H1 (cell line): ENCODE measurements at regions of chr7 and their contacts with region 1.

Region 1: GRCh38 chr7:111855161-111855856 is 293.0 kb upstream of the IMMP2L start:
- DNase-seq: no peak
- H3K4me3 ChIP-seq: no peak overlapping the region
- H3K27ac ChIP-seq: no peak overlapping the region
- H3K4me1 ChIP-seq: peaks cover 10 to 16% (median 12%) of the 10 kb centered on the region in 4 experiments
- H3K27me3 ChIP-seq: no peaks in the 10 kb centered on the region
- CTCF ChIP-seq: peak; percentile 15 to 74 (median 68)
- EP300 ChIP-seq: no peak
- POLR2A ChIP-seq: no peak
- RAD21 ChIP-seq: peak; percentile 65 to 70

Region 2: GRCh38 chr7:111711426-111712065 is 143.8 kb before region 1 on chr7:
- CTCF ChIA-PET with region 1: no interaction called
- POLR2A ChIA-PET with region 1: no interaction called
- DNase-seq: no peak
- H3K4me3 ChIP-seq: no peak overlapping the region
- H3K27ac ChIP-seq: no peak overlapping the region
- H3K4me1 ChIP-seq: no peaks in the 10 kb centered on the region
- H3K27me3 ChIP-seq: peaks cover 0 to 1% (median 0%) of the 10 kb centered on the region in 4 experiments; a peak in 1 of 7 replicates
- CTCF ChIP-seq: no peak
- EP300 ChIP-seq: no peak
- POLR2A ChIP-seq: no peak
- RAD21 ChIP-seq: no peak

Region 3: DNA sequence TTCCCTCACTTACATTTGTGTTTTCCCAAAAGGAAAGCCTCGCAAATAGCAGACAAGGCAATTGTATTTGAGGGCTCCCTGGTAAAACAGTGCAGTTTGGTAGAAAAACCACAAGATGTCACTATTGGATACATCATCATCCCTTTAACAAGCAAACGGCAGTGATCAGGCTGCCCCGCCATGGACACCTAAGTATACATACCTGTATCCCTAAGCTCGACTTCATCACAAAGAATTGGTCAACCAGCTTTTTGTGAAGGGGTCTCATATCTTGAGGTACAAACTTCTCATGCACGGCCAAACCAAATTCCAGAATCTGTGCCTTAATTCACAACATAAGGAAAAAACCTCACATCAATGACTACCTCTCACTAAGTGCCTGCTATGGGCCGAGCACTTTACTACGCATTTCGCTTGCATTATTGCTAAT is 113.5 kb before region 1 on chr7:
- CTCF ChIA-PET with region 1: interaction called, 32 read pairs
- POLR2A ChIA-PET with region 1: no interaction called
- DNase-seq: no peak
- H3K4me3 ChIP-seq: no peak overlapping the region
- H3K27ac ChIP-seq: no peak overlapping the region
- H3K4me1 ChIP-seq: peaks cover 0 to 9% (median 0%) of the 10 kb centered on the region in 4 experiments; a peak in 1 of 7 replicates
- H3K27me3 ChIP-seq: no peaks in the 10 kb centered on the region
- CTCF ChIP-seq: peak in 2 of 3 experiments; percentile 79 to 87; a peak in 3 of 4 replicates
- EP300 ChIP-seq: no peak
- POLR2A ChIP-seq: no peak
- RAD21 ChIP-seq: peak; percentile 86 to 91

Region 4: DNA sequence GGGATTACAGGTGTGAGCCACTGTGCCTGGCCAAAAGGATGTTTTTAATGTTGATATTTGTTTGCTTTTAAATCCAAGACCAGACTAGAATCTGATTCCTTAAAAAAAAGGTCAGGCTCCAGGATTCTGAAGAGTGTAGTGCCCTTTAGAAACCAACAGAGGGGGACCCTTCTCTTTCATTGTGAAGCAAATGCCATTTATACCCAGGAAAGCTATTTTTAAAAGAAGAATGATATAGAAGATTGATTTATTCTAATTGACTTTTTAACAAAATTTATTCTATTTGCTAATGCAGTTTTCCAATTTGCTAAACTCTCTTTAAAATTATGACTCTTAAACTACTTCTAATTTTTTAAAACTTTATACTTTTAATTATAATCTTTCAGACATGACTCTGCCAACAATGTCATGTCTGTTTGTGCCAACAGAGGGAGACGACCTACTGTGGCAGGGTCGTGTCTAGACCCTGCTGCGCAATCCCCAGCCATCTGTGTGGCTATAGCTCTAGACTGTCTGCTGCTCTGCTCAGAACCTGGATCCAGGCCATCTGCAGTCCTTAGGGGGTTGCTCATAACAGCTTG is 92.0 kb before region 1 on chr7:
- CTCF ChIA-PET with region 1: interaction called, 274 read pairs
- POLR2A ChIA-PET with region 1: interaction called, 4 read pairs
- DNase-seq: no peak
- H3K4me3 ChIP-seq: no peak overlapping the region
- H3K27ac ChIP-seq: no peak overlapping the region
- H3K4me1 ChIP-seq: no peaks in the 10 kb centered on the region; a peak in 1 of 7 replicates
- H3K27me3 ChIP-seq: peaks cover 0 to 2% (median 0%) of the 10 kb centered on the region in 4 experiments; a peak in 1 of 7 replicates
- CTCF ChIP-seq: peak; percentile 44 to 62 (median 58)
- EP300 ChIP-seq: no peak
- POLR2A ChIP-seq: no peak
- RAD21 ChIP-seq: peak; percentile 63 to 66

Region 5: GRCh38 chr7:111780527-111780926 is 74.8 kb before region 1 on chr7:
- CTCF ChIA-PET with region 1: interaction called, 21 read pairs
- POLR2A ChIA-PET with region 1: no interaction called
- DNase-seq: no peak
- H3K4me3 ChIP-seq: no peak overlapping the region
- H3K27ac ChIP-seq: no peak overlapping the region
- H3K4me1 ChIP-seq: peaks cover 0 to 7% (median 1%) of the 10 kb centered on the region in 4 experiments; a peak in 4 of 7 replicates
- H3K27me3 ChIP-seq: no peaks in the 10 kb centered on the region
- CTCF ChIP-seq: no peak
- EP300 ChIP-seq: no peak
- POLR2A ChIP-seq: no peak
- RAD21 ChIP-seq: no peak

Region 6: DNA sequence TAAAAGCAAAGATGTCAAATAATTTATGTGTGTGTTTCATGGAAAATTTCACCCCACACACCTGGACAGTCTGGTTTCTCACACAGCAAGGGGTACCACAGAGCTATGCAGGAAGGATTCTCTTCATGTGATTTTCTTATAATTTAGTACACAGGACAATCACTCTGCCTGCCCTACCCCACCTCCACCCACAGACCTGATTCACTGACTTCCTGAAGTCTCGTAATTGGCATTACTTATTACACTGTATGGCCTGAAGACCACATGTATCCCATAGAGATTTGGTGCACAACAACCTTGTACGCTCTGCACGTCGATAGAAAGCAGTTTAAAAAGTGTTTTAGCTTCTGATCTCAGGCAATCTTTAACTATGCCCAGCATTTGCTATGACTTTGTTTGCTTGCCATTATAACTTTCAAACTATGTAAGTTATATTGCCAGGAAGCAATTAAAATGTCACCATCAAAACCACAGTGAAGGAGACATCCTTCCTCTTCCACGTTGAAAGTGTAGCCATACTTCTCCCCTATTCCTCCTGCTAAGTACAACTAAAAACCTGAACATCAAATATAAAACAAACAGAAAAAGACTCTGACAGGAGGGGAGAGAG is 13.6 kb before region 1 on chr7:
- CTCF ChIA-PET with region 1: interaction called, 29 read pairs
- POLR2A ChIA-PET with region 1: no interaction called
- DNase-seq: no peak
- H3K4me3 ChIP-seq: no peak overlapping the region
- H3K27ac ChIP-seq: no peak overlapping the region
- H3K4me1 ChIP-seq: no peaks in the 10 kb centered on the region
- H3K27me3 ChIP-seq: no peaks in the 10 kb centered on the region
- CTCF ChIP-seq: no peak
- EP300 ChIP-seq: no peak
- POLR2A ChIP-seq: no peak
- RAD21 ChIP-seq: no peak

Region 7: GRCh38 chr7:111873963-111874690 is 18.8 kb after region 1 on chr7:
- CTCF ChIA-PET with region 1: interaction called, 17 read pairs
- POLR2A ChIA-PET with region 1: interaction called, 3 read pairs
- DNase-seq: no peak
- H3K4me3 ChIP-seq: no peak overlapping the region
- H3K27ac ChIP-seq: no peak overlapping the region
- H3K4me1 ChIP-seq: peaks cover 2 to 20% (median 6%) of the 10 kb centered on the region in 4 experiments
- H3K27me3 ChIP-seq: no peaks in the 10 kb centered on the region
- CTCF ChIP-seq: no peak
- EP300 ChIP-seq: no peak
- POLR2A ChIP-seq: no peak
- RAD21 ChIP-seq: no peak

Region 8: GRCh38 chr7:111914261-111914660 is 59.0 kb after region 1 on chr7:
- CTCF ChIA-PET with region 1: no interaction called
- POLR2A ChIA-PET with region 1: no interaction called
- DNase-seq: no peak
- H3K4me3 ChIP-seq: no peak overlapping the region
- H3K27ac ChIP-seq: no peak overlapping the region
- H3K4me1 ChIP-seq: no peaks in the 10 kb centered on the region
- H3K27me3 ChIP-seq: no peaks in the 10 kb centered on the region
- CTCF ChIP-seq: no peak
- EP300 ChIP-seq: no peak
- POLR2A ChIP-seq: no peak
- RAD21 ChIP-seq: no peak